ENCODE measurements at regions of chr7 and their contacts with region 1.

Region 1: GRCh38 chr7:105055621-105056020 is 41.6 kb downstream of the KMT2E start:
- DNase-seq: no peak
- H3K4me3 ChIP-seq: no peak overlapping the region
- H3K4me3 Mint-ChIP-seq: peak overlapping the region in 4 of 8 donors; percentile 7 to 61 (median 38)
- H3K27ac ChIP-seq: no peak overlapping the region
- H3K27ac Mint-ChIP-seq: peak overlapping the region in 6 of 7 donors; percentile 24 to 84 (median 68)
- H3K4me1 ChIP-seq: peaks cover 80% of the 10 kb centered on the region
- H3K4me1 Mint-ChIP-seq: peaks cover 53 to 90% (median 71%) of the 10 kb centered on the region in 4 donors
- H3K27me3 ChIP-seq: no peaks in the 10 kb centered on the region
- H3K27me3 Mint-ChIP-seq: no peaks in the 10 kb centered on the region

Region 2: GRCh38 chr7:105067691-105068090 is 12.1 kb after region 1 on chr7:
- CTCF ChIA-PET with region 1: interaction called, 4 read pairs
- POLR2A ChIA-PET with region 1: no interaction called
- intact Hi-C with region 1: loop called (anchors 2 kb)
- DNase-seq: no peak
- H3K4me3 ChIP-seq: no peak overlapping the region
- H3K4me3 Mint-ChIP-seq: no peak overlapping the region
- H3K27ac ChIP-seq: no peak overlapping the region
- H3K27ac Mint-ChIP-seq: peak overlapping the region in 4 of 7 donors; percentile 32 to 72 (median 52)
- H3K4me1 ChIP-seq: peaks cover 14% of the 10 kb centered on the region
- H3K4me1 Mint-ChIP-seq: peaks cover 14 to 31% (median 25%) of the 10 kb centered on the region in 4 donors
- H3K27me3 ChIP-seq: no peaks in the 10 kb centered on the region
- H3K27me3 Mint-ChIP-seq: no peaks in the 10 kb centered on the region